Mammary epithelial cell (primary cell): ENCODE measurements at regions of chr3 and their contacts with region 1.

Region 1: GRCh38 chr3:25455441-25456132 is 27.5 kb downstream of the RARB start:
- DNase-seq: no peak
- H3K4me3 ChIP-seq: no peak overlapping the region
- H3K27ac ChIP-seq: no peak overlapping the region
- H3K4me1 ChIP-seq: peaks cover 29% of the 10 kb centered on the region
- H3K27me3 ChIP-seq: no peaks in the 10 kb centered on the region
- CTCF ChIP-seq: no peak

Region 2: GRCh38 chr3:25214034-25214433 is 241.6 kb before region 1 on chr3:
- CTCF ChIA-PET with region 1: no interaction called
- dilution Hi-C with region 1: no loop called
- in situ Hi-C with region 1: no loop called
- intact Hi-C with region 1: no loop called
- DNase-seq: no peak
- H3K4me3 ChIP-seq: no peak overlapping the region
- H3K27ac ChIP-seq: no peak overlapping the region
- H3K4me1 ChIP-seq: no peaks in the 10 kb centered on the region
- H3K27me3 ChIP-seq: no peaks in the 10 kb centered on the region
- CTCF ChIP-seq: no peak

Region 3: DNA sequence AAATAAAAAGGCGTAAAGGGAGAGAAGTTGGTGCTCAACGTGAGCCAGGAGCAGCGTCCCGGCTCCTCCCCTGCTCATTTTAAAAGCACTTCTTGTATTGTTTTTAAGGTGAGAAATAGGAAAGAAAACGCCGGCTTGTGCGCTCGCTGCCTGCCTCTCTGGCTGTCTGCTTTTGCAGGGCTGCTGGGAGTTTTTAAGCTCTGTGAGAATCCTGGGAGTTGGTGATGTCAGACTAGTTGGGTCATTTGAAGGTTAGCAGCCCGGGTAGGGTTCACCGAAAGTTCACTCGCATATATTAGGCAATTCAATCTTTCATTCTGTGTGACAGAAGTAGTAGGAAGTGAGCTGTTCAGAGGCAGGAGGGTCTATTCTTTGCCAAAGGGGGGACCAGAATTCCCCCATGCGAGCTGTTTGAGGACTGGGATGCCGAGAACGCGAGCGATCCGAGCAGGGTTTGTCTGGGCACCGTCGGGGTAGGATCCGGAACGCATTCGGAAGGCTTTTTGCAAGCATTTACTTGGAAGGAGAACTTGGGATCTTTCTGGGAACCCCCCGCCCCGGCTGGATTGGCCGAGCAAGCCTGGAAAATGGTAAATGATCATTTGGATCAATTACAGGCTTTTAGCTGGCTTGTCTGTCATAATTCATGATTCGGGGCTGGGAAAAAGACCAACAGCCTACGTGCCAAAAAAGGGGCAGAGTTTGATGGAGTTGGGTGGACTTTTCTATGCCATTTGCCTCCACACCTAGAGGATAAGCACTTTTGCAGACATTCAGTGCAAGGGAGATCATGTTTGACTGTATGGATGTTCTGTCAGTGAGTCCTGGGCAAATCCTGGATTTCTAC is 27.4 kb before region 1 on chr3 and contains the start of gene RARB:
- CTCF ChIA-PET with region 1: no interaction called
- dilution Hi-C with region 1: no loop called
- in situ Hi-C with region 1: no loop called
- intact Hi-C with region 1: loop called (anchors 1 kb)
- DNase-seq: peak; percentile 90
- H3K4me3 ChIP-seq: peak within 1 kb of the TSS; percentile 44 to 49 (median 49)
- H3K27ac ChIP-seq: no peak within 1 kb of the TSS
- H3K4me1 ChIP-seq: peaks cover 33% of the 10 kb centered on the region
- H3K27me3 ChIP-seq: peaks cover 2% of the 10 kb centered on the region
- CTCF ChIP-seq: no peak
- total RNA-seq, gene RARB: 0.59 to 8.2 TPM